AG04449 (cell line): ENCODE measurements at regions of chr9 and their contacts with region 1.

Region 1: GRCh38 chr9:35923927-35924763 is 14.9 kb downstream of the SPAAR start:
- DNase-seq: peak; percentile 80
- H3K4me3 ChIP-seq: no peak overlapping the region
- CTCF ChIP-seq: no peak

Region 2: DNA sequence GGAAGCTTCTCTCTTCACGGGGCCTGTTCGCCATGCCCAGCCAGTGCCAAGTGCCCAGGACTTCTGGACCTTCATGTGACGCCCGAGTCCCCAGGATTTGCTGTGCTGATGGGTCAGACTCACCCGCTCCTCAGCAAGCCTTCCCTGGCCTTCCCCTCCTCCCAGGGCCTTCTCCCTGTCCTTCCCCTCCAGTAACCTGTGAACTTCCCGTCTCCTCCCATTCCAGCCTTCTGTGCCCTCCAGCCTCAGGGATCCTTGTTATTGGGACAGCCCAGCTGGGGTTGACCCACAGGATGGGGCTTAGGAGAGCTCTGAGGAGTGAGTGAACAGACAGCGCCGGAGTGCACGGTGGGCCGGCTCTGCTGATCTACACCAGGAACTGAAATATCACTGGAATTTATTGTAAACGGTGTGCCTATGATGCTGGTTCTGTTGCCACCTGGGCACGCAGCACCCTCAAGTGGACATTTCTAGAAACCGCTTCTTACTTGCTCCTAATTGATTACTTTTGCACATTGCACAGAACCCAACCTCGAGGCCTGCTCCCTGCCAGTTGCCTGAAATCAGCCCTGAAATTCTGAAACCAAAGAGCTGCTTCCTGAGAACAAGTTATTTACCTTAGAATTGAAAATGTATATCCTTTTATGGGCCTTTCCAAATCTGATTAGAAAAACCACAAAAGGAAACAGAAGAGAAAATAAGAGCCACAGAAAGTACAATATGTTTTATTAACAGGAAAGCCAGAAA is 13.4 kb before region 1 on chr9:
- CTCF ChIA-PET with region 1: interaction called, 137 read pairs
- POLR2A ChIA-PET with region 1: interaction called, 15 read pairs
- DNase-seq: no peak
- H3K4me3 ChIP-seq: no peak overlapping the region
- CTCF ChIP-seq: peak; percentile 41

Region 3: GRCh38 chr9:35935755-35936509 is 11.8 kb after region 1 on chr9:
- CTCF ChIA-PET with region 1: interaction called, 10 read pairs
- POLR2A ChIA-PET with region 1: interaction called, 16 read pairs
- DNase-seq: peak; percentile 83
- H3K4me3 ChIP-seq: no peak overlapping the region
- CTCF ChIP-seq: no peak

Region 4: GRCh38 chr9:35945341-35946018 is 21.3 kb after region 1 on chr9:
- CTCF ChIA-PET with region 1: interaction called, 30 read pairs
- POLR2A ChIA-PET with region 1: interaction called, 4 read pairs
- DNase-seq: no peak
- H3K4me3 ChIP-seq: no peak overlapping the region
- CTCF ChIP-seq: peak; percentile 86